ENCODE measurements at regions of chrX and their contacts with region 1.

Region 1: DNA sequence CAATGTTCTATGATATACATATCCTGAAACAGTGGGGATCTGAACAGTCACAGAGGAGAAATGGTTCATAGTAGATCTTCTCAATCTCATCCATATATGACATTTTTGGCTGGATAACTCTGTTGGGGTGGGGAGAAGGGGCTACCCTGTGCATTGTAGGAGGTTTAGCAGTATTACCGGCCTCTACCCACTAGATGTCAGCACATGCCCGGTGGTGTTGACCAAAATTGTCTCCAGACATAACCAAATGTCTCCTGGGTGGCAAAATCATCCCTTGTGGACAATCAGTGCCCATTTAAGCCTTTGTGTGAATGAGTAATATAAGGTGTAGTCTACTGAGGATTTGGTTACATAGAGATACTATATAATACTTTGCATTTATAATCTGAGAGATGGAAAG is 89.9 kb downstream of the PLS3 start:
- DNase-seq: peak in 1 of 2 donors; percentile 15
- ATAC-seq: peak in 7 of 8 donors; percentile 52 to 88 (median 64)
- H3K4me3 ChIP-seq: no peak overlapping the region
- H3K27ac ChIP-seq: peak overlapping the region in 3 of 10 donors; percentile 7 to 48 (median 43)
- H3K4me1 ChIP-seq: peaks cover 0 to 27% (median 9%) of the 10 kb centered on the region in 9 donors
- H3K27me3 ChIP-seq: peaks cover 0 to 60% (median 0%) of the 10 kb centered on the region in 7 donors
- CTCF ChIP-seq: peak; percentile 8 to 61 (median 54)

Region 2: GRCh38 chrX:115344885-115345614 is 305.9 kb before region 1 on chrX:
- intact Hi-C with region 1: loop called in 1 of 10 experiments (anchors 5 kb)
- DNase-seq: peak; percentile 74 to 84
- ATAC-seq: peak; percentile 88 to 98 (median 95)
- H3K4me3 ChIP-seq: no peak overlapping the region
- H3K27ac ChIP-seq: peak overlapping the region in 9 of 10 donors; percentile 15 to 80 (median 65)
- H3K4me1 ChIP-seq: peaks cover 0 to 19% (median 8%) of the 10 kb centered on the region in 9 donors
- H3K27me3 ChIP-seq: peaks cover 0 to 35% (median 0%) of the 10 kb centered on the region in 7 donors
- CTCF ChIP-seq: no peak

Region 3: GRCh38 chrX:115449742-115450141 is 201.2 kb before region 1 on chrX:
- intact Hi-C with region 1: loop called in 2 of 10 experiments (anchors 10 kb)
- DNase-seq: peak; percentile 54 to 56
- ATAC-seq: peak in 7 of 8 donors; percentile 31 to 73 (median 49)
- H3K4me3 ChIP-seq: no peak overlapping the region
- H3K27ac ChIP-seq: peak overlapping the region in 2 of 10 donors; percentile 15 to 29
- H3K4me1 ChIP-seq: peaks cover 0 to 17% (median 4%) of the 10 kb centered on the region in 9 donors
- H3K27me3 ChIP-seq: peaks cover 0 to 57% (median 0%) of the 10 kb centered on the region in 7 donors
- CTCF ChIP-seq: no peak

Region 4: GRCh38 chrX:115690511-115691216 is 39.7 kb after region 1 on chrX:
- intact Hi-C with region 1: loop called in 1 of 10 experiments (anchors 5 kb)
- DNase-seq: peak in 1 of 2 donors; percentile 57
- ATAC-seq: peak in 6 of 8 donors; percentile 64 to 80 (median 68)
- H3K4me3 ChIP-seq: no peak overlapping the region
- H3K27ac ChIP-seq: peak overlapping the region in 3 of 10 donors; percentile 8 to 68 (median 10)
- H3K4me1 ChIP-seq: peaks cover 0 to 7% (median 0%) of the 10 kb centered on the region in 9 donors
- H3K27me3 ChIP-seq: peaks cover 0 to 72% (median 0%) of the 10 kb centered on the region in 7 donors
- CTCF ChIP-seq: peak; percentile 61 to 89 (median 70)

Measured in heart right ventricle (tissue), 16 donors.